MCF 10A (cell line): ENCODE measurements at regions of chr4 and their contacts with region 1.

Region 1: GRCh38 chr4:48944756-48945241 is 38.2 kb upstream of the OCIAD2 start:
- DNase-seq: peak; percentile 73
- H3K4me3 Mint-ChIP-seq: peak overlapping the region; percentile 48
- H3K27ac Mint-ChIP-seq: peak overlapping the region; percentile 93
- H3K4me1 Mint-ChIP-seq: peaks cover 34% of the 10 kb centered on the region
- H3K27me3 Mint-ChIP-seq: no peaks in the 10 kb centered on the region
- CTCF ChIP-seq: peak; percentile 81

Region 2: GRCh38 chr4:47831026-47831679 is 1113.6 kb before region 1 on chr4:
- CTCF ChIA-PET with region 1: no interaction called
- POLR2A ChIA-PET with region 1: no interaction called
- intact Hi-C with region 1: no loop called
- DNase-seq: peak; percentile 18
- H3K4me3 Mint-ChIP-seq: no peak overlapping the region
- H3K27ac Mint-ChIP-seq: no peak overlapping the region
- H3K4me1 Mint-ChIP-seq: peaks cover 13% of the 10 kb centered on the region
- H3K27me3 Mint-ChIP-seq: no peaks in the 10 kb centered on the region
- CTCF ChIP-seq: no peak

Region 3: DNA sequence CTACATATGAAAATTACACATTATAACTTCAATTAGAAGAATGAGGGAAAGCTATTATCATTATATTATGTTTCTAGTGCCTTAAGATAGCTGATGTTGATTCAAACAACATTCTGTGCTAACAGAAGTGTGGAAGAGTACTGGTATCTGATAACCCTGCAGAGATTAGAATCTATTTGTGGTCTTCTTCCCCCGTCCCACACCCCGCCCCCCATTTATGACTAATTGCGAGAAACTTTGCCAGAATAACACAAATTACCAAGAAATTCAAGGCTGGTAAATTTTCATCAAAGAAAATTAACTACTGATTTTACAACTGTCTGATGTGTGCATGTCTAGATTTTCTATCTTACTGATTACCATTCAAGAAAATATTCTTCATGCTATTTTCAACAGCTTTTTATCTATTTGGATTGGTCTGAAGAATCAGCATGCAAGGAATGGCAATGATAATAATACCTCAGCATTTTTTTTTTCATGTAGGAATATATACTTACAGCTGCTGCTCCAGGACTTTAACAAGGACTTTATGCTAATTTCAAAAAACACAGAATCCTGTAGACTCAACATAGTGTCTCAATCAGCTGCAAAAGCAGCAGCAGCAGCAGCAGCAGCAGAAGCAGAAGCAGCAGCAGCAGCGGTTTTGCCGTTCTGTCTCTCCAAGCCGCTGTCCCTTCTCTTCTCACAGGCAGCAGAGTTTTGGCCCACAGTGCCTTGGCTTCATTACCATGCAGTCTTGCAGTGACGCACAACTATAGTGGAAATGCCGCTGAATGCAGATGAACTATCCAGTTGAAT is 291.4 kb before region 1 on chr4:
- CTCF ChIA-PET with region 1: no interaction called
- POLR2A ChIA-PET with region 1: no interaction called
- intact Hi-C with region 1: no loop called
- DNase-seq: no peak
- H3K4me3 Mint-ChIP-seq: no peak overlapping the region
- H3K27ac Mint-ChIP-seq: no peak overlapping the region
- H3K4me1 Mint-ChIP-seq: peaks cover 7% of the 10 kb centered on the region
- H3K27me3 Mint-ChIP-seq: no peaks in the 10 kb centered on the region
- CTCF ChIP-seq: no peak

Region 4: DNA sequence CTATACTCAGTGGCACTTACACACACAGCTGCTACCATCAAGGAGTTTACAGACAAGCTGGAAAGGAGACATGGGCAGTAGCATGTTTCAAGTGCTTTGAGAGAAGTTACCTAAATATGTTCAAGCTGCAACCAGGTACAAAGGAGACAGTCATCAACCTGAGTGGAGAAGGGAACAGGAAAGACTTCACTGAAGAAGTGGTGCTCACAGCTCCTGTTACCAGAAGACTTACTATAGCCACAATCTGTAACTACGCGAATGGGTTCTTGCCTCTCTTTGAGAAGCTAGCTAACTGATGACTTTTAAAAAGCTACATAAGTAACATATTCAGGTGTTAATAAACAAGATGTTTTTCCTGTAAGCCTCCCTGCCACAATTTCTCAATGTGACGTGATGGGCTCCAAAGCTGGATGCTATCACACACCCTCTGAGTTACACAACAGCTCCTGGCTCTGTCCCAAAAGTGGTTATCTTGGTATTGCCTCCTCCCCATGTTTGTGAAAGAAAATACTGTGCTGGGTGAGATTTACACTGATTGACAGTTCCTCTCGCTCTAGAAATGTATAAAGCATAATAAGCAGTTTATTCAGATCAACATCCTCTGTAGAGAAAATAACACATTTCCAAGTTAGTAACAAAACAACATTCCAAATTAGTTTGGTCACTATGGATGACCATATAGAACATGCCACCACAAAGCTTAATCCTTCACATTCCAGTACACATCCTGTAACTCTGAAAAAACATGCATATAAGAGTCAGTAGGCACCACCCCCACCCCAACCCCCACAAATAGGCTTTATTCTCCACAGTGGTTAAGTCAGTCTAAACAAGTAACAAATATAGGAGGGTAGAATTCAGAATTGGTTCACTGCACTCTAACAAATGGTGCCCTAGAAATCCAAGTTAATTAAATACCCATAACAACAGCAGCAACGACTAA is 246.5 kb before region 1 on chr4:
- CTCF ChIA-PET with region 1: no interaction called
- POLR2A ChIA-PET with region 1: no interaction called
- intact Hi-C with region 1: no loop called
- DNase-seq: peak; percentile 97
- H3K4me3 Mint-ChIP-seq: peak overlapping the region; percentile 43
- H3K27ac Mint-ChIP-seq: peak overlapping the region; percentile 80
- H3K4me1 Mint-ChIP-seq: peaks cover 34% of the 10 kb centered on the region
- H3K27me3 Mint-ChIP-seq: no peaks in the 10 kb centered on the region
- CTCF ChIP-seq: no peak

Region 5: DNA sequence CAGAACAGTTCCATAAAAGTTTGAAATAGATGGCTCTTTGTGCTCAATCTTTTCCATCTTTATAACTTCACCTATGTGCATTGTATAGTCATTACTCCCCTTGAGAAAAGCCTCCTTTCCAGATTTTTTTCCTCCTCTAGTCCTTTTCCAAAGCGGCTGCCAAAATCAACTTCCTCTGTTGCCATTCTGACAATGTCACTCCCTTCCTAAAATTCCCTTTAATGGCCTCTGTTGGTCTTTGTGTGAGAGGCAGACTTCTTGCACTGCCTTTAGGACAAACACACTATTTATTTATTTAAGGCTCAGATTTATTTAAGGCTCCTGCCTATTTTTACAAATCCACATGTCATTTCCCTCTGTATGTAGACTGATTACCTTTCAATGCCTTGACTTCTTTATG is 143.1 kb before region 1 on chr4:
- CTCF ChIA-PET with region 1: interaction called, 12 read pairs
- POLR2A ChIA-PET with region 1: no interaction called
- intact Hi-C with region 1: no loop called
- DNase-seq: peak; percentile 30
- H3K4me3 Mint-ChIP-seq: peak overlapping the region; percentile 10
- H3K27ac Mint-ChIP-seq: peak overlapping the region; percentile 94
- H3K4me1 Mint-ChIP-seq: peaks cover 17% of the 10 kb centered on the region
- H3K27me3 Mint-ChIP-seq: no peaks in the 10 kb centered on the region
- CTCF ChIP-seq: no peak

Region 6: DNA sequence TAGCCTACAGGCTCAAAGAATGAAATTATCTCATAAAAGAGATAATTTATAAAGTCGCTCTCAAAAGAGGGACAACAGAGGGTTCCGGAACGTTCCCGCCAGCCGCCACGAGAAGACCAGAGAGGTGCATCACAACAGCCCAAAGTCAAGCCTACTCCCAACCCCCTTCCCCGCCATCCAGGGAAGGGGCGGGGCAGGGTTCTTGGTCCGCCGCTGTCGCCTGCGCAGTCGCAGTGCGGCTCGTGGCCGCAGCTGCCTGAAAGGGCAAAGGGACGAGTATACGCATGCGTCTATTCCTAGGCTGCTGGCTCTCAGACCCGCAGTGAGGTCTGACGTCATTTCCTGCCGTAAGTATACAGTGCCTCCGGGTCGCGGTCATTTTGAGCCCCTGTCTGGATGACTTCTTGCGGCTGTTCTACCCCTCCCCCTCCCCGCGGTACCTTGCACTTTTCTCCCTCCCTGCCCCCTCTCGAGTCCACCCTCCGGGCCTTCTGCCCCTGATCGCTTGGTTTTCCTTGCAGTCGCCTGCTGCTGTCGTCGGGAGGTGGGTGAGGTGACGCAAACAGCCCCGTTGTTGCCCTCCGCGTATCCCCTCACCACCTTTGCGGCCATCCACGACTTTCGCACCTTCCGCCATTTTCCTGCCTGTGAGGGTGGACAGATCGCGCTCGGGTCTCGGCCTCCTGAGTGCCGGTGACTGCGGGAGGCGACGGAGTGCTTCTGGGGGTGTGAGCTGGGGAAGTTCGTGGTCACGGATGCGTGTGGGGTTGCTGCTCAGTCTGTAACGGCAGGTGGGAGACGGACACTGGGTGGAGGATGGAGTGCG is 113.9 kb before region 1 on chr4 and contains the start of gene OCIAD1:
- CTCF ChIA-PET with region 1: interaction called, 3 read pairs
- POLR2A ChIA-PET with region 1: interaction called, 3 read pairs
- intact Hi-C with region 1: loop called (anchors 5 kb)
- DNase-seq: peak; percentile 99
- H3K4me3 Mint-ChIP-seq: peak within 1 kb of the TSS; percentile 95
- H3K27ac Mint-ChIP-seq: peak within 1 kb of the TSS; percentile 97
- H3K4me1 Mint-ChIP-seq: peaks cover 5% of the 10 kb centered on the region
- H3K27me3 Mint-ChIP-seq: no peaks in the 10 kb centered on the region
- CTCF ChIP-seq: no peak
- total RNA-seq, gene OCIAD1: 207 and 224 TPM in 2 replicates

Region 7: GRCh38 chr4:48906206-48907173 is 38.3 kb before region 1 on chr4 and contains the start of gene OCIAD2:
- CTCF ChIA-PET with region 1: interaction called, 52 read pairs
- POLR2A ChIA-PET with region 1: interaction called, 15 read pairs
- intact Hi-C with region 1: loop called (anchors 2 kb)
- DNase-seq: peak; percentile 64
- H3K4me3 Mint-ChIP-seq: peak within 1 kb of the TSS; percentile 82
- H3K27ac Mint-ChIP-seq: peak within 1 kb of the TSS; percentile 76
- H3K4me1 Mint-ChIP-seq: peaks cover 40% of the 10 kb centered on the region
- H3K27me3 Mint-ChIP-seq: no peaks in the 10 kb centered on the region
- CTCF ChIP-seq: no peak
- total RNA-seq, gene OCIAD2: 66.3 and 94.1 TPM in 2 replicates

Region 8: GRCh38 chr4:48913346-48913745 is 31.5 kb before region 1 on chr4:
- CTCF ChIA-PET with region 1: interaction called, 52 read pairs
- POLR2A ChIA-PET with region 1: interaction called, 15 read pairs
- intact Hi-C with region 1: loop called (anchors 2 kb)
- DNase-seq: peak; percentile 87
- H3K4me3 Mint-ChIP-seq: peak overlapping the region; percentile 38
- H3K27ac Mint-ChIP-seq: peak overlapping the region; percentile 65
- H3K4me1 Mint-ChIP-seq: peaks cover 22% of the 10 kb centered on the region
- H3K27me3 Mint-ChIP-seq: no peaks in the 10 kb centered on the region
- CTCF ChIP-seq: no peak

Region 9: DNA sequence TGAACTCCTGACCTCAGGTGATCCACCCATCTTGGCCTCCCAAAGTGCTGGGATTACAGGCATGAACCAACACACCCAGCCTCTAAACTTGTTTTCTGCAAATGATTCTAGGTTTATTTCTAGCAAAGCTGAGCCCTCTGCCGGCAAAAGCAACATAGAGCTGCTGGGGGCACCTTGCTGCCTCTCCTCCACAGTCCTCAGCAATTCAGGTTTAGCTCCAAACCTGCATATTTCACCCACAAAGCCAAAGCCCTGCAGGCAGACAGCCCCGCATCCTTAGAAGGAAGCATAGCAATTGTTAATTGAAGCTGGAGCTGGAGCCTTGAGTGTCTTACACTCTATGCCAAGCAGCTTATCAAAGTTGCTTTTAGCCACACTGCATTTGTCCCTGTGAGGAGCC is 13.3 kb before region 1 on chr4:
- CTCF ChIA-PET with region 1: interaction called, 10 read pairs
- POLR2A ChIA-PET with region 1: interaction called, 3 read pairs
- intact Hi-C with region 1: no loop called
- DNase-seq: no peak
- H3K4me3 Mint-ChIP-seq: no peak overlapping the region
- H3K27ac Mint-ChIP-seq: no peak overlapping the region
- H3K4me1 Mint-ChIP-seq: no peaks in the 10 kb centered on the region
- H3K27me3 Mint-ChIP-seq: no peaks in the 10 kb centered on the region
- CTCF ChIP-seq: no peak

Region 10: GRCh38 chr4:48963042-48963679 is 18.4 kb after region 1 on chr4:
- CTCF ChIA-PET with region 1: interaction called, 23 read pairs
- POLR2A ChIA-PET with region 1: interaction called, 10 read pairs
- intact Hi-C with region 1: no loop called
- DNase-seq: peak; percentile 91
- H3K4me3 Mint-ChIP-seq: no peak overlapping the region
- H3K27ac Mint-ChIP-seq: no peak overlapping the region
- H3K4me1 Mint-ChIP-seq: peaks cover 19% of the 10 kb centered on the region
- H3K27me3 Mint-ChIP-seq: no peaks in the 10 kb centered on the region
- CTCF ChIP-seq: peak; percentile 99